Activated CD8-positive, alpha-beta T cell treated with anti-CD3 and anti-CD28 coated beads, Interleukin-2, amount 10 ng/mL, durations not matched to agents 7 days and 5 days (primary cell): ENCODE measurements at regions of chr5 and their contacts with region 1.

Region 1: GRCh38 chr5:73525606-73526203 is 27.5 kb downstream of the BTF3 start:
- DNase-seq: no peak
- ATAC-seq: no peak
- H3K4me3 Mint-ChIP-seq: no peak overlapping the region
- H3K27ac Mint-ChIP-seq: no peak overlapping the region
- H3K4me1 Mint-ChIP-seq: no peaks in the 10 kb centered on the region
- H3K27me3 Mint-ChIP-seq: peaks cover 22% of the 10 kb centered on the region

Region 2: DNA sequence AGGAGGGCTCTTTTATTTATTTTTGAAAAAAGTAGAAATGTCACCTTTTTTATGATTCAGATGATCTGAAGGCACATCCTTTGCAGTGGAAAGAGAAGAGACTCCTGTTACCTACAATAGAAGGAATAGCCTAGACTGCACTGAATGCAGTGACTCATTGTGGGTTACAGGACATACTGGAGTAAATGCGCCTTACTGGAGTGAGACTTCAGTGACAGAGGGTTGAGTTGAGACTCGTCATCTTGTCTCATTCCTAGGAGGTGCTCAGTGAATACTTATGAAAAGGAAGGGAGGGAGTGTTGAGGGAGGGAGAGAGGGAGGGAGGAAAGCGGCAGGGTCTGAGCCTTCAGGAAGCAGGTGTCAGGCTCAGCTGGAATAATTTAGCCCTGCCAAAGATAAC is 14.5 kb after region 1 on chr5:
- CTCF ChIA-PET with region 1: interaction called, 81 read pairs
- POLR2A ChIA-PET with region 1: no interaction called
- DNase-seq: no peak
- ATAC-seq: no peak
- H3K4me3 Mint-ChIP-seq: no peak overlapping the region
- H3K27ac Mint-ChIP-seq: no peak overlapping the region
- H3K4me1 Mint-ChIP-seq: no peaks in the 10 kb centered on the region
- H3K27me3 Mint-ChIP-seq: peaks cover 17% of the 10 kb centered on the region